ENCODE measurements at regions of chr2 and their contacts with region 1.

Region 1: DNA sequence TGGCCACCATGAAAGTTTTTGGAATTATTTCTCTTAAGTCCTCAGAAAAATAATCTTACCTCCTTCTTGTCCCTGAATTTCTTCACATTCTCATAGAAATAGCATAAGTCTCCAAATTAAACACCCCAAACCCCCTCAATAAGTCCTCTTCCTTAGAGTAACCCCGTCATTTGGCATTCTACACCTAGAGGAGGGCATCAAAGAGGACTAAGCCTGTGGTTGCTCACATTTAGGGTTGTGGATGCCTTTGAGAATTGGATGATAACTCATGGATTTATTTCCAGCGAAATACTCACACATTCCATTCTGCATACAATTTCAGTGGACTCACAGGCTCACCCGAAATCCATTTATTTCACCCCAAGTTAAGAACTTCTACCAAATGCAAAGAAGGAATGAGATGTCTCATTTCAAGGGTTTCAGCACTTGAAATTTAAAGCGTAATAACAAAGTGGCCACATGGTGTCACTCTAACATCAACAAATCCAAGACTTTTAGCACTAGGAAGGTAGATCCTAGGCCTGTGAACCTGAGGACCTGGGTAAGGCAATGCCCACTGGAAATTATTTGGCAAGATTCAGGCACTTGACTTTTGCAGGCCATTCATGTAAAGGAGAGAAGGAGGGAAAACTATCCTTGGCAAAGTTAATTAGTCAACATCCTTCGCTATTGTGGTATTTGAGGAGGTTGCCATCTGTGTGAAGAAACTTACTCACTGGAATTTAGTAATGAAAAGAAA is 24.6 kb downstream of the DYTN start:
- DNase-seq: no peak
- H3K4me3 ChIP-seq: no peak overlapping the region
- H3K27ac ChIP-seq: no peak overlapping the region
- H3K4me1 ChIP-seq: no peaks in the 10 kb centered on the region
- H3K27me3 ChIP-seq: no peaks in the 10 kb centered on the region
- CTCF ChIP-seq: peak; percentile 58 to 63 (median 61)
- EP300 ChIP-seq: no peak
- POLR2A ChIP-seq: no peak

Region 2: DNA sequence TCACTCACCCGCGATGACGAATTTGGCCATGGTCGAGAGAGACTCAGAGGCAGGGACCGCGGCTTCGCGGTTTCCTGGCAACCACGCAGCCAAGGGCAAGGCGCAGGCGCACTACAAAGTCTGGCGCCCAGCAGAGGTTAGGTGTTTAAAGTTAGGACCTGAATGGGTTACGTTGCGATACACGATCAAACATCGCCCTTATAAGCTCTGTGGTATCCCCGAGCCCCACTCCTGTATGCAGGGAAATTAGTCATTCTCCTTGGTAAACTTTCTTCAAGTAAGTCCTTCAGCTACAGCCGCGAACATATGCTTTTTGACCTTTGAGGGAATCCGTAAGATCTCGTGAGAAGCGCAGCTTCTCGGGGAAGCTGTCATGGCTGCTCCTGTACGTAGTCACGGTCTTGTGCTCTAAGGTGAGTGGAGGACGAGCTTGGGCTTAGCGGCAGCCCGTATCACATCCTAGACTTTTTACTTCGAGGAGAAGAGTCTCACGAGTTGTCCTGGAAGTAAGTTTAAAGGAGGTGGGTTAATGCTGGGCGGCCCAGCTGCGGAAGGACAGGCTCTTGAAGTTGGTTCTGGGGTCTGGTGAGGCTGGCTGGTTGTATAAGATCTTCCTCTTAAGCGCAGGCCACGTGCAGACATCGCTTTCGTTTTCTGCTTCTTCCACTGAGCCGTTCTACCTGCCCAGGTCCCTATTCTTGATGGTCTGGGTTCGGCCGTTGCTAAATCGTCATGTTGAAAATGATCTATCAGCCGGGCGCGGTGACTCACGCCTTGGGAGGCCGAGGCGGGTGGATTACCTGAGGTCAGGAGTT is 71.9 kb after region 1 on chr2 and contains the starts of genes FASTKD2 and MDH1B:
- intact Hi-C with region 1: loop called (anchors 10 kb)
- DNase-seq: peak; percentile 97
- H3K4me3 ChIP-seq: peak within 1 kb of the TSS; percentile 74 to 85 (median 76)
- H3K27ac ChIP-seq: peak within 1 kb of the TSS; percentile 82 to 89 (median 87)
- H3K4me1 ChIP-seq: peaks cover 30 to 43% (median 42%) of the 10 kb centered on the region in 4 donors
- H3K27me3 ChIP-seq: no peaks in the 10 kb centered on the region
- CTCF ChIP-seq: no peak
- EP300 ChIP-seq: no peak
- POLR2A ChIP-seq: peak; percentile 10
- total RNA-seq, gene FASTKD2: 22.5 to 31.3 (median 25.2) TPM
- total RNA-seq, gene MDH1B: 0.19 to 1.2 (median 0.75) TPM

Region 3: DNA sequence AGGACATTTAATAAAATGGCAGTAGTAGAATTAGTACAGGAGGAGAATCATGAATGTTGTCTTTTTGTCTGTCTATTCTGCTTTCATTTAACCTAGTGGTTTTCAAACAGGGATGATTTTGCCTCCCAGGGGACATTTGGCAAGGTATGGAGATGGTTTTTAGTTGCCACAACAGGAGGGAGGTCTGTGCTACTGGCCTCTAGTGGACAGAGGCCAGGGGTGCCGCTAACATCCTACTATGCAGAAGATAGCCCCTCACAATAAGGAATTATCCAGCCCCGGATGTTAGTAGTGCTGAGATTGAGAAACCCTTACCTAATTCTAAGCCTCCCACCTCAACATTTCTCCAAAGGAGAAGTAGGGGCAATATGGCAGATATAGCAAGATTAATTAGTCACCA is 90.2 kb after region 1 on chr2:
- intact Hi-C with region 1: loop called (anchors 5 kb)
- DNase-seq: no peak
- H3K4me3 ChIP-seq: no peak overlapping the region
- H3K27ac ChIP-seq: no peak overlapping the region
- H3K4me1 ChIP-seq: peaks cover 0 to 4% (median 0%) of the 10 kb centered on the region in 4 donors
- H3K27me3 ChIP-seq: no peaks in the 10 kb centered on the region
- CTCF ChIP-seq: peak in 1 of 3 experiments; percentile 25
- EP300 ChIP-seq: no peak
- POLR2A ChIP-seq: no peak